ENCODE measurements at regions of chr15 and their contacts with region 1.

Region 1: GRCh38 chr15:75321708-75322107 is 14.2 kb upstream of the COMMD4 start:
- DNase-seq: no peak
- ATAC-seq: no peak
- H3K4me3 ChIP-seq: no peak overlapping the region
- H3K27ac ChIP-seq: no peak overlapping the region
- H3K4me1 ChIP-seq: no peaks in the 10 kb centered on the region
- H3K27me3 ChIP-seq: no peaks in the 10 kb centered on the region
- CTCF ChIP-seq: no peak

Region 2: GRCh38 chr15:74906446-74907162 is 415.1 kb before region 1 on chr15 and contains the start of gene FAM219B:
- CTCF ChIA-PET with region 1: no interaction called
- POLR2A ChIA-PET with region 1: no interaction called
- in situ Hi-C with region 1: no loop called
- intact Hi-C with region 1: no loop called
- DNase-seq: no peak
- ATAC-seq: peak; percentile 96
- H3K4me3 ChIP-seq: peak within 1 kb of the TSS; percentile 89 to 94
- H3K27ac ChIP-seq: peak within 1 kb of the TSS; percentile 95
- H3K4me1 ChIP-seq: peaks cover 13% of the 10 kb centered on the region
- H3K27me3 ChIP-seq: no peaks in the 10 kb centered on the region
- CTCF ChIP-seq: no peak
- total RNA-seq, gene FAM219B: 68.6 TPM

Region 3: GRCh38 chr15:75058127-75058905 is 263.4 kb before region 1 on chr15:
- CTCF ChIA-PET with region 1: no interaction called
- POLR2A ChIA-PET with region 1: no interaction called
- in situ Hi-C with region 1: no loop called
- intact Hi-C with region 1: no loop called
- DNase-seq: no peak
- ATAC-seq: no peak
- H3K4me3 ChIP-seq: no peak overlapping the region
- H3K27ac ChIP-seq: no peak overlapping the region
- H3K4me1 ChIP-seq: no peaks in the 10 kb centered on the region
- H3K27me3 ChIP-seq: no peaks in the 10 kb centered on the region
- CTCF ChIP-seq: no peak

Region 4: GRCh38 chr15:75090388-75090734 is 231.3 kb before region 1 on chr15:
- CTCF ChIA-PET with region 1: no interaction called
- POLR2A ChIA-PET with region 1: no interaction called
- in situ Hi-C with region 1: no loop called
- intact Hi-C with region 1: no loop called
- DNase-seq: no peak
- ATAC-seq: no peak
- H3K4me3 ChIP-seq: no peak overlapping the region
- H3K27ac ChIP-seq: no peak overlapping the region
- H3K4me1 ChIP-seq: no peaks in the 10 kb centered on the region
- H3K27me3 ChIP-seq: no peaks in the 10 kb centered on the region
- CTCF ChIP-seq: no peak

Region 5: DNA sequence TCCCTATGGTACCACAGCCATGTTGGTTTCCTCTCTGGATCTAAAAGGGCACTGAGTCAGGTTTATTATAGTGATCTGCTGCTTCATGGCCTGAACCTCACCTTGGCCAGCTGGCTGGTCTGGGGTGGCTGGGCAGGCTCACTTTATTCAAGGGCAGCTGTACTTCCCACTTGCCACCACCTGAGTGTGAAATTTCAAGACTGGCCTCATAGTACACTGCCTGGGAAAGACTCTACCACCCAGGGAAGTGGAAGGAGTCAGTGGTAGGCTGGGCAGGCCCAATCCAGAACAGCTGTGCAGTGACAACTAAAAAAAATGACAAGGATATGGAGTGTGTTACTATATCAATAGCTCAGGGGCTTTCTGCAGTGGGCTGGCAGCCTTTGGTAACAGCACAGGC is 295.1 kb after region 1 on chr15:
- CTCF ChIA-PET with region 1: no interaction called
- POLR2A ChIA-PET with region 1: interaction called, 10 read pairs
- in situ Hi-C with region 1: no loop called
- intact Hi-C with region 1: no loop called
- DNase-seq: no peak
- ATAC-seq: peak; percentile 64
- H3K4me3 ChIP-seq: no peak overlapping the region
- H3K27ac ChIP-seq: no peak overlapping the region
- H3K4me1 ChIP-seq: no peaks in the 10 kb centered on the region
- H3K27me3 ChIP-seq: no peaks in the 10 kb centered on the region
- CTCF ChIP-seq: no peak

Measured in Panc1 (cell line).